ENCODE measurements at regions of chr18 and their contacts with region 1.

Region 1: DNA sequence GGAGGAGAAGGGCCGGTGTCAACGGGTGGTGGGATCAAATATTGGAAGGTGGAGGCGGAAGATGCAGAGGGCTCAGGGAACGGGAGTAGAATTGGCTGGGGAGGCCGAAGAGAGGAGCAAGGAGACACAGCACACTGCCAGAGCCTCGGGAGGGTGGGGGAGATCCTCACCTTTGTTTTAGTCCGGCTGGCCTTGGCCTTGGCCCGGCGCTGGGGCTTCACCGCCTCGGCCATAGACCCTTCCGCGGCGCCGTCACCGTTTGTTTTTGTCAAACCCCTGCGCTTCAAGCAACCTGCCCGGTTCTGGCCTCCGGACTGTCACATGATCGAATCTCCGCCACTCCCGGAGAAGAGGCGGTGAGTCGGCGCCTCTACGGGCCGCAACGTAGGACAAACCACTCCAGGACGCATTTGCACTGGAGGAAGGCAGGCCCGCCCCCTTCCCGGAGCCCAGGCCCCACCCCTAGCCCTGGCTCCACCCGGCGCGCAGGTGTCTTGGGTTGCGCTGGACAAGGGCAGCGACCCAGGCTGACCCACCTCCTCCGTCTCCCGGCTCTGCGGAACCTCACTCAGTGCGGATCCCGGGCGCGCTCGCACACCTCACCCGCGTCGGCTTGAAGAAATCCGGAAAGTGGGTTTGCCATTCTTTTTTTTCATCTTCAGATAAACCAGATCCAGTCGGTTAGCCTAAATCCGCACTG is at the start of gene EPG5:
- DNase-seq: peak; percentile 96
- H3K4me3 ChIP-seq: peak within 1 kb of the TSS; percentile 60 to 98 (median 94)
- H3K27ac ChIP-seq: peak within 1 kb of the TSS; percentile 61
- H3K4me1 ChIP-seq: peaks cover 3% of the 10 kb centered on the region
- H3K27me3 ChIP-seq: no peaks in the 10 kb centered on the region
- CTCF ChIP-seq: no peak
- POLR2A ChIP-seq: peak; percentile 69
- total RNA-seq, gene EPG5: 20.6 and 25.6 TPM in 2 replicates

Region 2: DNA sequence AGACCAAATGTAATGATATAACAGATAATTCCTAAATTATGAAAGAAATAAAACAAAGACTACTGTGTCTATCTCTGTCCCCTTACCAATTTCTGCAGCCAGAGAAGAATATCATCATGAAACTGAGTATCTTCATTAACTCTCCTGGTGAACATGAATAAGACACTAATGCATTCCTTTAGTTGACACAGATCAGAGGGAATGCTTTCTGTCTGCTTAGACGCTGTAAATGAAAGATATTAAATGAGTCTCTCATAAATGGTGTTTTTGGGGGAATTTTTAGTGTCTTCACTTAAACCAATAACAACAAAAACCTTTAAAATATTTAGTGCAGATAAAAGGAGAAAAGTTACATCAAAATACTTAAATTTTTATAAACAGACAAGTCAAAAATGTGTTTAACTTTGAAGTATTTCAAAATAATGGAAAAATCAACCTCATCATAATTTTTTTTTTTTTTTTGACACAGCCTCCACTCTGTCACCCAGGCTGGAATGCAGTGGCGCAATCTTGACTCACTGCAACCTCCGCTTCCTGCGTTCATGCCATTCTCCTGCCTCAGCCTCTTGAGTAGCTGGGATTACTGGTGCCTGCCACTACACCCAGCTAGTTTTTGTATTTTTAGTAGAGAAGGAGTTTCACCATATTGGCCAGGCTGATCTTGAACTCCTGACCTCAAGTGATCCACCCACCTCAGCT is 16.0 kb before region 1 on chr18:
- CTCF ChIA-PET with region 1: interaction called, 3 read pairs
- POLR2A ChIA-PET with region 1: no interaction called
- dilution Hi-C with region 1: no loop called
- intact Hi-C with region 1: loop called (anchors 1 kb)
- DNase-seq: peak; percentile 24
- H3K4me3 ChIP-seq: no peak overlapping the region
- H3K27ac ChIP-seq: peak overlapping the region; percentile 35
- H3K4me1 ChIP-seq: peaks cover 11% of the 10 kb centered on the region
- H3K27me3 ChIP-seq: no peaks in the 10 kb centered on the region
- CTCF ChIP-seq: no peak
- POLR2A ChIP-seq: no peak